Head of caudate nucleus (tissue), 42 donors: ENCODE measurements at regions of chr13 and their contacts with region 1.

Region 1: GRCh38 chr13:77329133-77329910 is 2.4 kb upstream of the MYCBP2 start:
- DNase-seq: peak; percentile 78 to 95 (median 89)

Region 2: DNA sequence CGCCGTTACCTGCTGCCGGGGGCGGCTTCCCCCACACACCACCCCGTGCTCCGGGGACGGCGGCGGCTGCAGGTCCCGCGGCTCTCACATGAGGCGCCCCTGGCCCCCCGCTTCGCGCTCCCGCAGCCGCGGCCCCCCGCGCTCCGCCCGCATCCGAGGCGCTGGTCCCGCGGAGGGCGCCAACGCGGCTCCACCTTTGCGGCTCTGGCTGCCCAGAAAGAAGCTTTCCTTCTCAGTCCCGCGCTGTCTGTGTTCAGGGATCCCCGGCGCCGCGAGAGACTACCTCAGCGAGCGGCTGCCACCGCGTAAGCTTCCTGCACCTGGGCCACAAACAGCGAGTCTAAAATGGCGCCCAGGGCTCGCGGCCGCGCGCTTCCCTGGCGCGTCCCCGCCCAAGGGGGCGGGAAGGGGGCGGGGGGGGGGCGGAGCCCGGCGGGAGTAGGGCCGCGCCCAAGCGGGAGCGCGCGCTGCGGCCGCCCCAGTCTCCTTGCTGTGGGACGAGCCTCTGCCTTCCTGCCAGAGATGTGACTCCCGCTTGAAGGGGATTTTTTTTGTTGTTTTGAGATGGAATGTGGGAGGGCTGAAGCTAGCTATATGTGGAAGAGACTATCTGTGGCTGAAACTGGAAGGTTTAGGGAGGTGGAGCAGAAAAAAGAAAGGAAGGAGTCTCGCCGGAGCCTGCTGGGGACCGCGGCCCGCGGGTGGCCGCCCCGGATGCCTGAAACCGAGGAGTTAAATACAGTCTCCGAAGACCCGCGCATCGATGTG is 302.3 kb before region 1 on chr13 and contains the start of gene FBXL3:
- intact Hi-C with region 1: loop called (anchors 5 kb)
- DNase-seq: peak; percentile 69 to 95 (median 87)

Region 3: GRCh38 chr13:77479326-77479725 is 150.0 kb after region 1 on chr13:
- intact Hi-C with region 1: loop called (anchors 2 kb)
- DNase-seq: no peak

Region 4: DNA sequence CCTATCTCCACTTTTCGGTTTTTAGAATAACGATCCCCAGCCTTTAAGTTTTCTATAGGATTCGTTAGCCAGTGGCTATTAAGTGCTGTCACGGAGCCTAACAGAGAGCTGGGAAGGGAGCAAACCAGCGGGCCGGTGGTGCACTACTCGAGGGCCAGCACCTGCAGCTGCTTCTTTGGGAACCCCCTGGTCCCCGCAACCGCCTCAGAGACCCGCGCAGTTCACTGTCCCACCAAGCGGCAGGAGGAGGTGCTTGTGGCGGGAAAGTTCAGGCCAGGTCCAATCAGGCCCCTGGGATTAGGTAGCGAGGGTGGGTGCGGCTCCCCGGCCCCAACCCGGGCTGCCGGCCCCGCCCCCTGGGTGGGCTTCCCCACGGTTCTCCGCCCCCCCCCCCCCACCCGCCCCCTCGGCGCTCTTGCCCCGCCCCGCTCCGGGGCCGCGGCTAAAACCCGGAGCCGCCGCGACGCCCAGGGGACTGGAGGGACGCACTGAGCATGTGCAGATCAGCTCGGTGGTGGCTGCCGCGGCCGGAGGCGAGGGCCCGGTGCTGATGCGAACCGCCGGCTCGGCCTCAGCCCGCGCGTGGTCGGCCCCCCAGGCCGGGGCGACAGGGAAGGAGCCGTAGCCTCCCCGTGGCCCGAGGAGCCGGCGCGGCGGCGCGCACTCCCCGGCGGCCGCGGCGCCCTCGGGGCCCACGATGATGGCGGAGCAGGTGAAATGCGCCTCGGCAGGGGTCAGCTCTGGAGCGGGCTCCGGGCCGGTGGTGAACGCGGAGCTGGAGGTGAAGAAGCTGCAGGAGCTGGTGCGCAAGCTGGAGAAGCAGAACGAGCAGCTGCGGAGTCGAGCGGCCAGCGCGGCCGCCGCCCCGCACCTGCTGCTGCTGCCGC is 368.1 kb after region 1 on chr13 and contains the start of gene SLAIN1:
- intact Hi-C with region 1: loop called (anchors 10 kb)
- DNase-seq: peak; percentile 82 to 97 (median 94)

Region 5: DNA sequence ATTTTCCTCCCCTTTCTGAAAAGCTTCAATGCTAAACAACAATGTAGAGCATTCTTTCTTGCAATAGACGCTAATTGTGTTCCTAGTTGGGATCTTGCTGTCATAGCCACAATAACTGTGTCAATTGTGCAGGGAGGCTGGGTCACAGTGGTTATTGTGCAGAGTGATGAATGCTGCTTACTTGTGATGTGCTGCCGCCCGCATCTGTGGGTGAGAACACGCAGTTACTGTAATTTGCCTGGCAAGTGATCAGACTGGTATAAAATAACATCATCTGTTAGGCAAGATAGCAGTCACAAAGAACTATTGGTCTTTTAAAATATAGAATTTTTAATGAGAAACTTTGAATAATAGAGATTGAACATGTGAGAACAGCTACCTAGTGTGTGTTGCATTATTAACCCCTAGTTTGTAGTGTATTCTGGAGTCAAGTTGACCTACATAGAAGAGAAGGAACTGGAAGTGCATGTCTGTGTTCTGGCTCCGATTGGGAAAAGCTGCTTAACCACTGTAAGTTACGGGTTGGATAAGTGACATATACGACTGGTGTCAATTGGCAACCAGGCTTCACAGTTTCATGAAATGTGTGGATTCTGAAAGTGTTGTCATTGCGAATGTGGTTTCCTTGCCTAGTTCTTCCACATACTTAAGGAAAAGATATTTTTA is 411.7 kb after region 1 on chr13:
- intact Hi-C with region 1: loop called (anchors 5 kb)
- DNase-seq: peak; percentile 64 to 95 (median 84)